ENCODE measurements at regions of chr11 and their contacts with region 1.

Region 1: DNA sequence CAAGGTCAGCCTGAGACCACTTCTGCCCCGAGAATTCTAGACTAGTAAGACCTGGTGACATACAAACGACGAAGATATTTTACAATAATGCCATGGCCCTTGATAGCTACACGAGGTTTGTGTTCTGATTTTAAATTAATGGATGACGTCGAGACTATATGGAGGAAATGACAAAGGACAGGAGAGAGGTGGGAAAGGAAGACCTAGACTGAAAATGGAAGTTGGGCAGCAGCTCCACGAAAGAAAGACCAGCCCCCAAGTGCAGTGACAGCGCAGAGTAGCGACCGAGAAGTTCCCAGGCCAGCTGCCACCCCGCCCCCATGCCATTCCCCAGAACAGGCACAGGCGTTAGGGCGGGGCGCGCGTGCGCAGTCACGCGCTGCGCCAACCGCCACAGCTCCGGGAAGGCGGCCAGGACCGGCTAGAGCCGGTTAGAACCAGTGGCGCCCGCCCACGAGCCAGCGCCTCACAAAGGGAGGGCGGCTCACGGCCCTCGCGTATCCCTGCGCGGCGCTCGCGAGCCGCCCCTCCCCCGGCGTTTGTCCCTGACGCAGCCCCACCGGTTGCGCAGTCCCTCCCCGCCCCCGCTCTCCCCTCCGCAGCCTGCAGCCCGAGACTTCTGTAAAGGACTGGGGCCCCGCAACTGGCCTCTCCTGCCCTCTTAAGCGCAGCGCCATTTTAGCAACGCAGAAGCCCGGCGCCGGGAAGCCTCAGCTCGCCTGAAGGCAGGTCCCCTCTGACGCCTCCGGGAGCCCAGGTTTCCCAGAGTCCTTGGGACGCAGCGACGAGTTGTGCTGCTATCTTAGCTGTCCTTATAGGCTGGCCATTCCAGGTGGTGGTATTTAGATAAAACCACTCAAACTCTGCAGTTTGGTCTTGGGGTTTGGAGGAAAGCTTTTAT is 1.5 kb upstream of the MALAT1 start:
- DNase-seq: peak; percentile 95 to 99 (median 98)
- ATAC-seq: peak; percentile 80
- H3K4me3 ChIP-seq: peak overlapping the region; percentile 72 to 84
- H3K4me3 Mint-ChIP-seq: no peak overlapping the region
- H3K27ac ChIP-seq: peak overlapping the region; percentile 98 to 99
- H3K27ac Mint-ChIP-seq: no peak overlapping the region
- H3K4me1 ChIP-seq: peaks cover 13% of the 10 kb centered on the region
- H3K4me1 Mint-ChIP-seq: peaks cover 19% of the 10 kb centered on the region
- H3K27me3 ChIP-seq: no peaks in the 10 kb centered on the region
- H3K27me3 Mint-ChIP-seq: no peaks in the 10 kb centered on the region
- CTCF ChIP-seq: no peak

Region 2: GRCh38 chr11:65329944-65330403 is 167.4 kb before region 1 on chr11:
- CTCF ChIA-PET with region 1: interaction called, 3 read pairs
- POLR2A ChIA-PET with region 1: interaction called, 20 read pairs
- intact Hi-C with region 1: no loop called
- DNase-seq: peak; percentile 63 to 90 (median 86)
- ATAC-seq: peak; percentile 18
- H3K4me3 ChIP-seq: no peak overlapping the region
- H3K4me3 Mint-ChIP-seq: no peak overlapping the region
- H3K27ac ChIP-seq: no peak overlapping the region
- H3K27ac Mint-ChIP-seq: no peak overlapping the region
- H3K4me1 ChIP-seq: peaks cover 11% of the 10 kb centered on the region
- H3K4me1 Mint-ChIP-seq: peaks cover 19% of the 10 kb centered on the region
- H3K27me3 ChIP-seq: no peaks in the 10 kb centered on the region
- H3K27me3 Mint-ChIP-seq: no peaks in the 10 kb centered on the region
- CTCF ChIP-seq: peak; percentile 92

Region 3: GRCh38 chr11:65440831-65441499 is 56.4 kb before region 1 on chr11:
- CTCF ChIA-PET with region 1: no interaction called
- POLR2A ChIA-PET with region 1: interaction called, 55 read pairs
- intact Hi-C with region 1: no loop called
- DNase-seq: peak in 1 of 9 experiments; percentile 30
- ATAC-seq: peak; percentile 49
- H3K4me3 ChIP-seq: no peak overlapping the region
- H3K4me3 Mint-ChIP-seq: peak overlapping the region; percentile 58
- H3K27ac ChIP-seq: peak overlapping the region in 1 of 2 experiments; percentile 35
- H3K27ac Mint-ChIP-seq: peak overlapping the region; percentile 82
- H3K4me1 ChIP-seq: peaks cover 10% of the 10 kb centered on the region
- H3K4me1 Mint-ChIP-seq: peaks cover 55% of the 10 kb centered on the region
- H3K27me3 ChIP-seq: no peaks in the 10 kb centered on the region
- H3K27me3 Mint-ChIP-seq: no peaks in the 10 kb centered on the region
- CTCF ChIP-seq: no peak

Region 4: DNA sequence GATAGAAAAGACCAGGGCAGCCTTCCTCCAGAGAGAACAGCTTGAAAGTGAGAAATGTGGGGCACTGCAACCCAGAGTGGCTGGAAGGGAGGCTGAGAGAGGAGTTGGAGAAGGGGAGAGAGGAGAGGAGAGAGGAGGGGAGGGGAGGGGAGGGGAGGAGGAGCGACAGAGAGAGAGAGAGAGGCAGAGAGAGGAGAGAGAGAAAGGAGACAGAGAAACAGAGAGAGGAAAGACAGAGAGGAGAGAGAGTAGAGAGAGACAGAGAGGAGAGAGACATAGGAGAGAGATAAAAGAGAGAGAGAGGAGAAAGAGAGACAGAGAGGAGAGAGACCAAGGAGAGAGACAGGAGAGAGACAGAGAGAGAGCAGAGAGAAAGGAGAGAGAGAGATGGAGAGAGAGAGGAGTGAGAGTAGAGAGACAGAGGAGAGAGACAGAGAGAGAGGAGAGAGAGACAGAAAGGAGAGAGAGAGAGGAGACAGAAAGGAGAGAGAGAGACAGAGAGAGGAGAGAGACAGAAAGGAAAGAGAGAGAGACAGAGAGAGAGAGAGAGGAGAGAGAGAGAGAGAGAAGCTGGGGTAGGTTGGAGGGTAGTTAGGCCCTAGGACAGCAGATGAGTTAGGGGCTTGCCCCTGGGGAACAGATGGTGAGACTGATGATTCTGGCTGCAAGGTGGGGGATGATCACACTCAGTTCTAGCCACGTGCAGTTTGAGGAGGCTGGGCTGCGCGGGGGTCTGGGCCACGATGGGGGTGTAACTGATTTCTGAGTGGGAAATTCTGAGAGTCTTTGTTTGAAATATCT is 18.9 kb after region 1 on chr11:
- CTCF ChIA-PET with region 1: interaction called, 13 read pairs
- POLR2A ChIA-PET with region 1: interaction called, 264 read pairs
- intact Hi-C with region 1: no loop called
- DNase-seq: peak in 2 of 9 experiments; percentile 14 to 17
- ATAC-seq: no peak
- H3K4me3 ChIP-seq: no peak overlapping the region
- H3K4me3 Mint-ChIP-seq: no peak overlapping the region
- H3K27ac ChIP-seq: no peak overlapping the region
- H3K27ac Mint-ChIP-seq: peak overlapping the region; percentile 74
- H3K4me1 ChIP-seq: peaks cover 5% of the 10 kb centered on the region
- H3K4me1 Mint-ChIP-seq: peaks cover 10% of the 10 kb centered on the region
- H3K27me3 ChIP-seq: no peaks in the 10 kb centered on the region
- H3K27me3 Mint-ChIP-seq: no peaks in the 10 kb centered on the region
- CTCF ChIP-seq: no peak

Region 5: GRCh38 chr11:65551572-65552398 is 54.4 kb after region 1 on chr11:
- CTCF ChIA-PET with region 1: interaction called, 3 read pairs
- POLR2A ChIA-PET with region 1: interaction called, 13 read pairs
- intact Hi-C with region 1: no loop called
- DNase-seq: peak in 7 of 9 experiments; percentile 51 to 80 (median 71)
- ATAC-seq: peak; percentile 26
- H3K4me3 ChIP-seq: no peak overlapping the region
- H3K4me3 Mint-ChIP-seq: peak overlapping the region; percentile 17
- H3K27ac ChIP-seq: no peak overlapping the region
- H3K27ac Mint-ChIP-seq: peak overlapping the region; percentile 69
- H3K4me1 ChIP-seq: peaks cover 78% of the 10 kb centered on the region
- H3K4me1 Mint-ChIP-seq: peaks cover 75% of the 10 kb centered on the region
- H3K27me3 ChIP-seq: no peaks in the 10 kb centered on the region
- H3K27me3 Mint-ChIP-seq: no peaks in the 10 kb centered on the region
- CTCF ChIP-seq: peak; percentile 53

Region 6: GRCh38 chr11:65859200-65859811 is 361.9 kb after region 1 on chr11:
- CTCF ChIA-PET with region 1: no interaction called
- POLR2A ChIA-PET with region 1: interaction called, 11 read pairs
- intact Hi-C with region 1: no loop called
- DNase-seq: peak; percentile 91 to 98 (median 98)
- ATAC-seq: peak; percentile 60
- H3K4me3 ChIP-seq: peak overlapping the region; percentile 65 to 73
- H3K4me3 Mint-ChIP-seq: peak overlapping the region; percentile 95
- H3K27ac ChIP-seq: peak overlapping the region; percentile 78 to 98
- H3K27ac Mint-ChIP-seq: peak overlapping the region; percentile 96
- H3K4me1 ChIP-seq: peaks cover 42% of the 10 kb centered on the region
- H3K4me1 Mint-ChIP-seq: peaks cover 51% of the 10 kb centered on the region
- H3K27me3 ChIP-seq: no peaks in the 10 kb centered on the region
- H3K27me3 Mint-ChIP-seq: no peaks in the 10 kb centered on the region
- CTCF ChIP-seq: no peak